ENCODE measurements at regions of chr1 and their contacts with region 1.

Region 1: GRCh38 chr1:12208764-12209494 is 20.9 kb upstream of the VPS13D start:
- DNase-seq: peak; percentile 88
- ATAC-seq: peak; percentile 60
- H3K4me3 ChIP-seq: no peak overlapping the region
- H3K4me3 Mint-ChIP-seq: peak overlapping the region; percentile 69
- H3K27ac ChIP-seq: peak overlapping the region; percentile 28 to 72
- H3K27ac Mint-ChIP-seq: peak overlapping the region; percentile 92
- H3K4me1 ChIP-seq: peaks cover 31 to 61% of the 10 kb centered on the region in 2 donors
- H3K4me1 Mint-ChIP-seq: peaks cover 62% of the 10 kb centered on the region
- H3K27me3 ChIP-seq: no peaks in the 10 kb centered on the region
- H3K27me3 Mint-ChIP-seq: no peaks in the 10 kb centered on the region
- CTCF ChIP-seq: peak; percentile 91

Region 2: GRCh38 chr1:12047120-12047876 is 161.6 kb before region 1 on chr1:
- CTCF ChIA-PET with region 1: no interaction called
- POLR2A ChIA-PET with region 1: no interaction called
- intact Hi-C with region 1: no loop called
- DNase-seq: peak; percentile 58
- ATAC-seq: peak; percentile 47
- H3K4me3 ChIP-seq: peak overlapping the region in 3 of 5 experiments; percentile 23 to 37 (median 30)
- H3K4me3 Mint-ChIP-seq: no peak overlapping the region
- H3K27ac ChIP-seq: no peak overlapping the region
- H3K27ac Mint-ChIP-seq: no peak overlapping the region
- H3K4me1 ChIP-seq: peaks cover 37 to 48% of the 10 kb centered on the region in 2 donors
- H3K4me1 Mint-ChIP-seq: peaks cover 25% of the 10 kb centered on the region
- H3K27me3 ChIP-seq: no peaks in the 10 kb centered on the region
- H3K27me3 Mint-ChIP-seq: no peaks in the 10 kb centered on the region
- CTCF ChIP-seq: no peak

Region 3: DNA sequence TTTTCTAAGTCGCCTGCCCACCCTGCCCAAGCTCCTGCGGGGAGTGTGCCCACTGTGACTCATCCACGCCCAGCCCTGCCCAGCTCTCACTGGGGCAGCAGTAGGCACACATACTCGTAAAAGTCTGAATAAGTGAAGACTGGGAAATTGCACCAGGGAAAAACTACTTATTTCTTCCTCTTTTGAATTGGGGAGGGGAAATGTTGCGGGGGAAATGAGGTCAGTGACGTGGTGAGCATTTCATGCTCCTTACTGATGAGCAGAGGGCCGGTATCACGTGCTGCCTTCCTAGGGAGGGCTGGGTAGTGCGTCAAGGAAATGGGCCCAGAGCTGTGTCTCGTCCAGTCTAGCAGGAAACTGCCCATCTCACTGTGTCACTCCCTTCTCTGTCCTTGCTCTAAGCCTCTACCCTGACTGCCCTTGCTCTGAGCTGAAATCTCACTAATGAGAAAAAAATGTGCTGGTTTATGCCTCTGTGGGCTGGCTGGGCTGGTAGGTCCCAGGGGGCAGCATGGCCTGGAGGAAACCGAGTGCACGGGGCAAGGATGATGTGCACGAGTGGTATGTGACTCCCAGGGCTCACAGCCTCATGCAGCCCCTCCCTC is 55.6 kb before region 1 on chr1:
- CTCF ChIA-PET with region 1: interaction called, 43 read pairs
- POLR2A ChIA-PET with region 1: interaction called, 4 read pairs
- intact Hi-C with region 1: loop called (anchors 2 kb)
- DNase-seq: peak; percentile 89
- ATAC-seq: peak; percentile 48
- H3K4me3 ChIP-seq: peak overlapping the region in 1 of 5 experiments; percentile 43
- H3K4me3 Mint-ChIP-seq: peak overlapping the region; percentile 69
- H3K27ac ChIP-seq: peak overlapping the region; percentile 93
- H3K27ac Mint-ChIP-seq: peak overlapping the region; percentile 92
- H3K4me1 ChIP-seq: peaks cover 74 to 91% of the 10 kb centered on the region in 2 donors
- H3K4me1 Mint-ChIP-seq: peaks cover 85% of the 10 kb centered on the region
- H3K27me3 ChIP-seq: no peaks in the 10 kb centered on the region
- H3K27me3 Mint-ChIP-seq: no peaks in the 10 kb centered on the region
- CTCF ChIP-seq: no peak

Region 4: GRCh38 chr1:12184008-12184681 is 24.8 kb before region 1 on chr1:
- CTCF ChIA-PET with region 1: interaction called, 15 read pairs
- POLR2A ChIA-PET with region 1: interaction called, 3 read pairs
- intact Hi-C with region 1: no loop called
- DNase-seq: peak; percentile 60
- ATAC-seq: peak; percentile 67
- H3K4me3 ChIP-seq: no peak overlapping the region
- H3K4me3 Mint-ChIP-seq: peak overlapping the region; percentile 67
- H3K27ac ChIP-seq: peak overlapping the region; percentile 26 to 43
- H3K27ac Mint-ChIP-seq: peak overlapping the region; percentile 87
- H3K4me1 ChIP-seq: peaks cover 25 to 62% of the 10 kb centered on the region in 2 donors
- H3K4me1 Mint-ChIP-seq: peaks cover 64% of the 10 kb centered on the region
- H3K27me3 ChIP-seq: no peaks in the 10 kb centered on the region
- H3K27me3 Mint-ChIP-seq: no peaks in the 10 kb centered on the region
- CTCF ChIP-seq: peak; percentile 24

Region 5: DNA sequence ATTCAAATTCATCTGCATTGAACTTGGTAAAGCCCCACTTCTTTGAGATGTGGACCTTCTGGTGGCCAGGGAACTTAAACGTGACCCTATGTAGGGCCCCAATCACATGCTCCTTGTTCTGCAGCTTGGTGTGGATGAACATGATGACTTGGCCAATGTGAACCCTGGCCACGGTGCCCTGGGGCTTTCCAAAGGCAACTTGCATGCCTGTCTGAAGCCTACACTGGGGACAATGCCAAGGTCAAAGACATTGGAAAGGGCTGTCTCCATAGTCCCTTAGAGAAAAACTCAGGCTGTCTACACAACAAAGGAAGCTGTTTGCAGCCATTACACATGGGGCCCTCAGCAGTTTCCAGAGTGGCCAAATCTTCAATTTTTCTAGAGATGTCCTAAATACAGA is 12.0 kb after region 1 on chr1:
- CTCF ChIA-PET with region 1: interaction called, 16 read pairs
- POLR2A ChIA-PET with region 1: interaction called, 12 read pairs
- intact Hi-C with region 1: no loop called
- DNase-seq: no peak
- ATAC-seq: no peak
- H3K4me3 ChIP-seq: no peak overlapping the region
- H3K4me3 Mint-ChIP-seq: no peak overlapping the region
- H3K27ac ChIP-seq: no peak overlapping the region
- H3K27ac Mint-ChIP-seq: no peak overlapping the region
- H3K4me1 ChIP-seq: peaks cover 0 to 3% of the 10 kb centered on the region in 2 donors
- H3K4me1 Mint-ChIP-seq: no peaks in the 10 kb centered on the region
- H3K27me3 ChIP-seq: peaks cover 0 to 7% (median 0%) of the 10 kb centered on the region in 4 experiments
- H3K27me3 Mint-ChIP-seq: peaks cover 4% of the 10 kb centered on the region
- CTCF ChIP-seq: no peak

Region 6: DNA sequence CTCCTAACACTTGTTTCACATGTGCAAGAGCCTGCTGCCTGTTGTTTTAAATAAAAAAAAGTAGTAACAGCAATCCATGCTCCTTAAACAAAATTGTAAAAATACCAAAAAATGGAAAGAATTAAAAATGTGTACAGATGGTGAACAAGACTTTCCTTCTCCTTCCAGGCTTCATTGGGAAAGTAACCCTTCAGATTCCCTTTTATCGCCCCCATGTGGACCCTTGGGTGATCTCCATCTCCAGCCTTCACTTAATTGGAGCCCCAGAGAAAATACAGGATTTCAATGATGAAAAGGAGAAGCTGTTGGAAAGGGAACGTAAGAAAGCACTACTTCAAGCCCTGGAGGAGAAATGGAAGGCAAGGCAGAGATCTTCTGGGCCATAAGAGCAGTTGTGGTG is 35.1 kb after region 1 on chr1:
- CTCF ChIA-PET with region 1: interaction called, 16 read pairs
- POLR2A ChIA-PET with region 1: no interaction called
- intact Hi-C with region 1: no loop called
- DNase-seq: peak; percentile 30
- ATAC-seq: no peak
- H3K4me3 ChIP-seq: no peak overlapping the region
- H3K4me3 Mint-ChIP-seq: no peak overlapping the region
- H3K27ac ChIP-seq: no peak overlapping the region
- H3K27ac Mint-ChIP-seq: no peak overlapping the region
- H3K4me1 ChIP-seq: no peaks in the 10 kb centered on the region
- H3K4me1 Mint-ChIP-seq: no peaks in the 10 kb centered on the region
- H3K27me3 ChIP-seq: no peaks in the 10 kb centered on the region
- H3K27me3 Mint-ChIP-seq: no peaks in the 10 kb centered on the region
- CTCF ChIP-seq: peak; percentile 31

Measured in B cell (primary cell).